Gastrocnemius medialis (tissue), 4 donors: ENCODE measurements at regions of chr10 and their contacts with region 1.

Region 1: DNA sequence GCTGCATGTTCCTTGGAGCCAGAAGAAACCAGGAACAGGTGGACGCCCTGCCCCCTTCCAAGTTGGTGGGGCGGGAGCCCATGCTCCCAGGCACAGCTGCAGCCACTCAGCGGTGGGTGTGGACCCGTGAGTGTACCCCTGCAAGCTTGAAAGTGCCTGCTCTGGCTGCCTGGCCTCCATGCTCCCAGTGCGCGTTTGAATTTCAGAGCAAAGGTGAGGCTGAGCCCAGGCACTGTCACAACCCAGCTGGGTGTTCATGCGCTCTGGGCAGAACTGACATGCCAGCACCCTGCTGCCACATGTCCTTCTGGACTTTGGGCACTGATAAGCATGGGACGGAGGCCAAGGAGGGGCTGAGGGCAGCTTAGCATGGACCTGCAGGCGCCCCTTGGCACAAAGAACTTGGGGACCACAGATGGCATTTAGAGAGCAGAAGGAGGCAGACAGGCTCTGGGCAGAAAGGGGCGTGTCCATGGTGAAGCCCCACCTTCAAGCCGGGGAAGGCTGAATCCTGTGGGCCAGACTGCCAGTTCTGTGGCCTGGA is 402.0 kb upstream of the NRG3 start:
- DNase-seq: no peak
- ATAC-seq: no peak
- H3K4me3 ChIP-seq: no peak overlapping the region
- H3K27ac ChIP-seq: no peak overlapping the region
- H3K4me1 ChIP-seq: no peaks in the 10 kb centered on the region
- H3K27me3 ChIP-seq: no peaks in the 10 kb centered on the region
- CTCF ChIP-seq: no peak
- POLR2A ChIP-seq: no peak

Region 2: DNA sequence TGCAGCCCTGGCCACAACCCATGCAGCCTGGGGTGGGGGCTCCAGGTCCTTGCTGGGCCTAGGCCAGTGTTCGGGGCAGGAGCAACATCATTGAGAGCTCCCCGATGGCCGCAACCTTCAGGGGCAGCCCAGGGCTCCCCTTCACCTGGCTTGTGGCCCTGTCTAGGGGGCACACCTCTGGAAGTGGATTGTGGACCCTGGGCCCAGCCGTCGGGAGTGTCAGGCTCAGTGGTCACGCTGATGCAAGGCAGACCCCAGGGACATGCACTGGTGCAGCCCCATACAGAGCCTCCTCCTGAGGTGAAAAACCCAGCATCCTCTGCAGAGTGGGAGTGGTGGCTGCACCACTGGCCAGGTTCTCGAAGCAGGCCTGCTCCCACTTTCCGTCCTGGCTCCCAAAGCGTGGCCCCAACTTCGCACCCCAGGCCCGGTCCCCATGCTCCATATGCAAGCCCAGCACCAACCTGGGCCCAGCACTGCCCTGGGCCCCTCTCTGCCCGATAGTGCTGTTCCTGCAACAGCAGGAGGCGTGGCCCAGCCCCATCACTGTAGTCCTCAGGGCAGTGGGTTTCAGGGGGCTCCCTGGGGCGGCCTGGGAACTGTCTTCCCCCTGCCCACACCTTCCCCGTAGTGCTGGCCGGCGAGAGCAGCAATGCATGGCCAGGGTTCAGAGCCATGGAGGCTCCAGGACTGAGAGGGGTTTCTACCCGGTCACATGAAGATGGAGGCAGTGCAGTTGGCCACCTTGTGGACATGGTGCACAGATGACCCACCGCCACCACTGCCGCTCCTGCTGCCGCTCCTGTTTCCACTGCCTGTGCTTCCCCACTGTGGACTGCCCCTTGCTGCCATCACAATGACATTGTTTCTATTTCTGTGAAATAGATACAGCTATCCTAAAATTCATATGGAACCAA is 98.1 kb after region 1 on chr10:
- in situ Hi-C with region 1: loop called in 1 of 4 experiments (anchors 25 kb)
- intact Hi-C with region 1: no loop called
- DNase-seq: no peak
- ATAC-seq: no peak
- H3K4me3 ChIP-seq: no peak overlapping the region
- H3K27ac ChIP-seq: no peak overlapping the region
- H3K4me1 ChIP-seq: no peaks in the 10 kb centered on the region
- H3K27me3 ChIP-seq: no peaks in the 10 kb centered on the region
- CTCF ChIP-seq: no peak
- POLR2A ChIP-seq: no peak